GM10248 (cell line): ENCODE measurements at regions of chr6 and their contacts with region 1.

Region 1: GRCh38 chr6:34610819-34611477 is 54.8 kb upstream of the SPDEF start:
- DNase-seq: no peak
- CTCF ChIP-seq: no peak

Region 2: GRCh38 chr6:34248727-34249551 is 362.0 kb before region 1 on chr6 and contains the start of gene SMIM29:
- CTCF ChIA-PET with region 1: interaction called, 13 read pairs
- POLR2A ChIA-PET with region 1: no interaction called
- DNase-seq: peak; percentile 97
- CTCF ChIP-seq: peak; percentile 74

Region 3: DNA sequence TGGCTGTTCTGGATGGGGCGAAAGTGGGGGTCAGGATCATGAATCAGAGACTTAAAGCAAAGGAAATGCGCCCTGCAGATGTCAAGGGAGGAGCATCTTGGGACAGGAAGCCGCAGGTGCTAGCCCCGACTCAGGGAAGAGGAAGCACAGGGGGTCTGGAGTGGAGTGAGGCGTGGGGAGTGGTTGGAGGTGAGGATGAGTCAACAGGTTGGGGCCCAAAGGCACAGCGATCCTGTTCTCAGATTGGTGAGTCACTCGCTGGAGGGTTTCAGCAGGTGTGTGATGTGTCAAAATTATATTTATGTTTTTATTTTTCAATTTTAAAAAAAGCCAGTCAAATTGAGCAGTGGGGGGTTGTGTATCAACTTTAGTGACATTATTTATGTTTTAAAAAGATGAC is 126.0 kb before region 1 on chr6:
- CTCF ChIA-PET with region 1: no interaction called
- POLR2A ChIA-PET with region 1: no interaction called
- DNase-seq: peak; percentile 69
- CTCF ChIP-seq: no peak

Region 4: GRCh38 chr6:34526992-34527728 is 83.8 kb before region 1 on chr6:
- CTCF ChIA-PET with region 1: interaction called, 23 read pairs
- POLR2A ChIA-PET with region 1: no interaction called
- DNase-seq: peak; percentile 98
- CTCF ChIP-seq: peak; percentile 78

Region 5: GRCh38 chr6:34593701-34594100 is 17.2 kb before region 1 on chr6:
- CTCF ChIA-PET with region 1: interaction called, 91 read pairs
- POLR2A ChIA-PET with region 1: no interaction called
- DNase-seq: no peak
- CTCF ChIP-seq: no peak

Region 6: DNA sequence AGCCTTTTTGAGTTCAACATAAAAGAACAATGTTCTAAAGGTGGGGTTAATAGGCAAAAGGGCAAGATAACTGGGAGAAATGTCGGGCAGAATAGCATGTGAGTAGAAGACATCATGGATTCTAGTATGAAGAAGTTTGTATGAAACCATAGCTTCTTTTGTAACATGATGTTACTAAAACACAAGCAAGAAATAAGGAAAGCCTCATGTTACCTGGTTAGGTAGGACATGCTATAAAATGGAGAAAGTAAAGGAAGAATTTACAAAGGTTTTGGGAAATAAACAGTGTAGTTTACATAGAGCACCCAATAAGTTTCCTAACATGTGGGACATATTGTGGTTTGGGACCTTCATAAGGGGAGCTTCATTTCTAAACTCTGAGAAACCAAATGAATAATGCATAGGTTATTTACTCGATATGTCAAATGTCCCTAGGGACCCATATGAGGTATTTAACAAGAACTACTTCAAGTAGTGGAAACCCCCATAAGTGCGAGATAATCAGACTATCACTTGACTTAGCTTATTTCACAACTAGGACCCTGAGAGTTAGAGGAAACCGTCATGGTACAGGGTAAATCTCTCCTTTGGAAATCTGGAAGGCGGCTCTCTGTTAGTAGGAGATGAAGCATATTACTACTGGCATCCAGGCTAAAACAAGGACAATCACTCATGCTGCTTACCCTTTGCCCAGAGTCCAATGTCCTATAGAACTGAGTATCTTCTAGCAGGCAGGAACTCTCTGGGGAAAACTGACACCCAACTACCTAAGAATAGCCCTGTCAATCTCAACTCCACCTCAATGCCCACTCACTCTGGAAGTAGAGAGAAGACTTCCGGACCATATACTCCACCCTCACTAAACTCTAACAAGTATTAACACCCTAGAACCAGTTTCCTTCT is 28.1 kb after region 1 on chr6:
- CTCF ChIA-PET with region 1: interaction called, 11 read pairs
- POLR2A ChIA-PET with region 1: no interaction called
- DNase-seq: peak; percentile 63
- CTCF ChIP-seq: no peak